ENCODE measurements at regions of chr18 and their contacts with region 1.

Region 1: GRCh38 chr18:59139371-59140298 is at the start of gene SEC11C:
- DNase-seq: peak; percentile 100
- ATAC-seq: peak; percentile 85
- H3K4me3 ChIP-seq: peak within 1 kb of the TSS; percentile 67 to 89 (median 82)
- H3K4me3 Mint-ChIP-seq: peak within 1 kb of the TSS; percentile 99
- H3K27ac ChIP-seq: peak within 1 kb of the TSS; percentile 99 to 100
- H3K27ac Mint-ChIP-seq: peak within 1 kb of the TSS; percentile 100
- H3K4me1 ChIP-seq: peaks cover 24 to 38% of the 10 kb centered on the region in 2 donors
- H3K4me1 Mint-ChIP-seq: peaks cover 42% of the 10 kb centered on the region
- H3K27me3 ChIP-seq: peaks cover 0 to 12% (median 4%) of the 10 kb centered on the region in 4 experiments
- H3K27me3 Mint-ChIP-seq: peaks cover 7% of the 10 kb centered on the region
- CTCF ChIP-seq: no peak
- total RNA-seq, gene SEC11C: 69.8 and 76.8 TPM in 2 replicates

Region 2: GRCh38 chr18:58599106-58599505 is 540.5 kb before region 1 on chr18:
- CTCF ChIA-PET with region 1: no interaction called
- POLR2A ChIA-PET with region 1: interaction called, 10 read pairs
- intact Hi-C with region 1: no loop called
- DNase-seq: no peak
- ATAC-seq: no peak
- H3K4me3 ChIP-seq: no peak overlapping the region
- H3K4me3 Mint-ChIP-seq: no peak overlapping the region
- H3K27ac ChIP-seq: no peak overlapping the region
- H3K27ac Mint-ChIP-seq: peak overlapping the region; percentile 15
- H3K4me1 ChIP-seq: peaks cover 3 to 7% of the 10 kb centered on the region in 2 donors
- H3K4me1 Mint-ChIP-seq: peaks cover 12% of the 10 kb centered on the region
- H3K27me3 ChIP-seq: no peaks in the 10 kb centered on the region
- H3K27me3 Mint-ChIP-seq: peaks cover 6% of the 10 kb centered on the region
- CTCF ChIP-seq: no peak

Region 3: DNA sequence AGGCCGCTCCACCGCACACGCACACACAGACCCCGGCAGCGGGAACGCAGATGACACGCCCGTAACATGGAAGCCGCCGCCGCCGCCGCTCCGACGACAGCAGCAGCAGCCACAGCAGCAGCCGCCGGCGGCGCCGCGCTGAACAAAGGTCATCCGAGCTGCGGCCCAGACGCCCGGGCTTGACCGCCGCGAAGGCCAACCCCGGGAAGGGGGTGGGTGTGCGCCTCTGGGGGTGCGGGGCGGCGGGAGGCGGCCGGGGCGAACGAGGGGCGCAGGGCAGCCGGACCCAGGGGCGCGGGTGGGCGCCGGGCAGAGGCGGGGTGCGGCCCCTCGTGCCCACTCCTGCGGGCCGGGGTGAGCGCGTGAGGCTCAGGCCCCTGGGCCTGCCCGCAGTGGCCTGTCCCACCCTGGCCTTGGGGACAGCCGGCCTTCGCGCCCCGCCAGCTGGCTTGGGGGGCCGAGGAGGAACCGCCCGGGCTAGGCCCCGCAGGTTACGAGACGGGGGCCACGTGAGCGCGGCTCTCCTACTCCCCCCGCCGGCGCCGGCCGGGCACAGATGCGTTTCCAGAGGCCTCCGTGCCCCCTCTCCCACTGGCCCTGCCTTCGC is 276.0 kb before region 1 on chr18:
- CTCF ChIA-PET with region 1: no interaction called
- POLR2A ChIA-PET with region 1: no interaction called
- intact Hi-C with region 1: loop called (anchors 2 kb)
- DNase-seq: peak; percentile 77
- ATAC-seq: peak; percentile 67
- H3K4me3 ChIP-seq: peak overlapping the region in 4 of 5 experiments; percentile 26 to 57 (median 52)
- H3K4me3 Mint-ChIP-seq: peak overlapping the region; percentile 83
- H3K27ac ChIP-seq: peak overlapping the region; percentile 38 to 81
- H3K27ac Mint-ChIP-seq: peak overlapping the region; percentile 91
- H3K4me1 ChIP-seq: peaks cover 20 to 24% of the 10 kb centered on the region in 2 donors
- H3K4me1 Mint-ChIP-seq: peaks cover 41% of the 10 kb centered on the region
- H3K27me3 ChIP-seq: no peaks in the 10 kb centered on the region
- H3K27me3 Mint-ChIP-seq: no peaks in the 10 kb centered on the region
- CTCF ChIP-seq: no peak

Region 4: DNA sequence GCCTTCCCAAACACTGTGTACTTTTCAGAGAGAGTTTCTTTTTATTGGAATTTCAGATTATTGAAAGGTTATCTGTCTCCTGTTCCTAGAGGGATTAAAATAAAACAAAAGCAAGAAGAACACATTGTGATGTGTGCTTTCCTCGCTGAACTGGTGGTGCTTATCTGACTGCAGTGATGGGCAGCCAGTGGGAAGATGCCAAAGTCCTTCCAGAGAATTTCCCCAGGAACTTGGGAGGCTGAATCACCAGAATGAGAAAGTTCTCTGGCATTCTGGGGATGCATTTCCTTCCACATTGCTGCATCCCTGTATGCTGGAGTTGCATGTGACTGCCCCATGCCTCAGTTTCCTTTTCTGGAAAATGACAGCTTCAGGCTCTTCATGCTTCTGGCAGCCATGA is 53.8 kb before region 1 on chr18:
- CTCF ChIA-PET with region 1: interaction called, 31 read pairs
- POLR2A ChIA-PET with region 1: interaction called, 3 read pairs
- intact Hi-C with region 1: loop called (anchors 1 kb)
- DNase-seq: no peak
- ATAC-seq: no peak
- H3K4me3 ChIP-seq: no peak overlapping the region
- H3K4me3 Mint-ChIP-seq: no peak overlapping the region
- H3K27ac ChIP-seq: no peak overlapping the region
- H3K27ac Mint-ChIP-seq: no peak overlapping the region
- H3K4me1 ChIP-seq: peaks cover 15 to 19% of the 10 kb centered on the region in 2 donors
- H3K4me1 Mint-ChIP-seq: peaks cover 29% of the 10 kb centered on the region
- H3K27me3 ChIP-seq: peaks cover 0 to 5% (median 0%) of the 10 kb centered on the region in 4 experiments
- H3K27me3 Mint-ChIP-seq: peaks cover 6% of the 10 kb centered on the region
- CTCF ChIP-seq: no peak

Region 5: GRCh38 chr18:59358712-59359575 is 219.3 kb after region 1 on chr18 and contains the start of gene LMAN1:
- CTCF ChIA-PET with region 1: interaction called, 3 read pairs
- POLR2A ChIA-PET with region 1: no interaction called
- intact Hi-C with region 1: loop called (anchors 1 kb)
- DNase-seq: peak; percentile 91
- ATAC-seq: peak; percentile 96
- H3K4me3 ChIP-seq: peak within 1 kb of the TSS; percentile 72 to 93 (median 81)
- H3K4me3 Mint-ChIP-seq: peak within 1 kb of the TSS; percentile 96
- H3K27ac ChIP-seq: peak within 1 kb of the TSS; percentile 56 to 80
- H3K27ac Mint-ChIP-seq: peak within 1 kb of the TSS; percentile 90
- H3K4me1 ChIP-seq: peaks cover 16 to 21% of the 10 kb centered on the region in 2 donors
- H3K4me1 Mint-ChIP-seq: peaks cover 36% of the 10 kb centered on the region
- H3K27me3 ChIP-seq: no peaks in the 10 kb centered on the region
- H3K27me3 Mint-ChIP-seq: peaks cover 5% of the 10 kb centered on the region
- CTCF ChIP-seq: no peak
- total RNA-seq, gene LMAN1: 41.1 and 48.8 TPM in 2 replicates

Measured in B cell (primary cell).